ENCODE measurements at regions of chr6 and their contacts with region 1.

Region 1: GRCh38 chr6:37489660-37490361 is 9.9 kb downstream of the CCDC167 start:
- DNase-seq: peak in 4 of 5 donors; percentile 18 to 71 (median 46)
- H3K4me3 ChIP-seq: no peak overlapping the region
- H3K4me3 Mint-ChIP-seq: peak overlapping the region; percentile 11 to 86 (median 65)
- H3K27ac ChIP-seq: peak overlapping the region; percentile 52
- H3K27ac Mint-ChIP-seq: peak overlapping the region; percentile 92 to 99 (median 96)
- H3K4me1 ChIP-seq: peaks cover 44% of the 10 kb centered on the region
- H3K4me1 Mint-ChIP-seq: peaks cover 72 to 87% (median 79%) of the 10 kb centered on the region in 3 donors
- H3K27me3 ChIP-seq: no peaks in the 10 kb centered on the region
- H3K27me3 Mint-ChIP-seq: no peaks in the 10 kb centered on the region

Region 2: GRCh38 chr6:37169496-37170272 is 320.1 kb before region 1 on chr6 and contains the start of gene PIM1:
- CTCF ChIA-PET with region 1: no interaction called
- POLR2A ChIA-PET with region 1: no interaction called
- DNase-seq: peak; percentile 92 to 99 (median 98)
- H3K4me3 ChIP-seq: peak within 1 kb of the TSS; percentile 68
- H3K4me3 Mint-ChIP-seq: peak within 1 kb of the TSS; percentile 90 to 99 (median 94)
- H3K27ac ChIP-seq: peak within 1 kb of the TSS; percentile 89
- H3K27ac Mint-ChIP-seq: peak within 1 kb of the TSS; percentile 91 to 98 (median 96)
- H3K4me1 ChIP-seq: peaks cover 29% of the 10 kb centered on the region
- H3K4me1 Mint-ChIP-seq: peaks cover 40 to 42% (median 41%) of the 10 kb centered on the region in 3 donors
- H3K27me3 ChIP-seq: no peaks in the 10 kb centered on the region
- H3K27me3 Mint-ChIP-seq: peaks cover 0 to 3% of the 10 kb centered on the region in 2 donors
- total RNA-seq, gene PIM1: 93.7 to 99.1 TPM

Region 3: DNA sequence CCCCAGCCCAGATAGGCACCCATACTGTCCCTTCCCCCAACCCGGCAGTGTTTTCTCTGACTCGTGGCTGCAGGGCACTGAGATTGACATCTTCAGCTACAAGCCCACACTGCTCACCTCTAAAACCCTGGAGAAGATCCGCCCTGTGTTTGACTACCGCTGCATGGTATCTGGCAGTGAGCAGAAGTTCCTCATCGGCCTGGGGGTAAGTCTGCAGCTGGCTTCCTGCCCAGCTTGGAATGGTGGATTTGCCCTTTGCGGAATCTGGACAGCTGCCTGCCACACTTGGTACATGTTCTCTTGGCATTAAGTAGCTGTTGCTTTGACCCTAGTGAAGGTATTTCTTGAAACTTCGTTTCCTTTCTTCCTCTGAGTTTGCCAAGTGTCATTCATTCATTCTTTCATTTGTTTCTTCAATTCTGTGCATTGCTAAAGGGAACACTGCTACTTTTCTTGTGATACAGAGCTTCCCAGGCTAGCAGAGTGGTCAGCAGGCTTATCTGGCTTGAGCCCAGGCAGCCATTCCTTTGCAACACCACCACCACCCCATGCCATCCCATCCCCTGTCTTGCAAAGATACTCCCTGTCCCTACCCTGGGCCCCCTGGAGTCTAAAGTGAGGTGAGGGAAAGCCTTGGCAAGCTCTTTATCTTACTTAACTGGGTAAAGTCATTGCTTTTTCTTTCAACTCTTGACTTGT is 16.3 kb before region 1 on chr6:
- CTCF ChIA-PET with region 1: no interaction called
- POLR2A ChIA-PET with region 1: no interaction called
- DNase-seq: no peak
- H3K4me3 ChIP-seq: no peak overlapping the region
- H3K4me3 Mint-ChIP-seq: no peak overlapping the region
- H3K27ac ChIP-seq: no peak overlapping the region
- H3K27ac Mint-ChIP-seq: peak overlapping the region in 4 of 8 donors; percentile 2 to 62 (median 56)
- H3K4me1 ChIP-seq: no peaks in the 10 kb centered on the region
- H3K4me1 Mint-ChIP-seq: peaks cover 0 to 5% (median 0%) of the 10 kb centered on the region in 3 donors
- H3K27me3 ChIP-seq: no peaks in the 10 kb centered on the region
- H3K27me3 Mint-ChIP-seq: no peaks in the 10 kb centered on the region

Region 4: DNA sequence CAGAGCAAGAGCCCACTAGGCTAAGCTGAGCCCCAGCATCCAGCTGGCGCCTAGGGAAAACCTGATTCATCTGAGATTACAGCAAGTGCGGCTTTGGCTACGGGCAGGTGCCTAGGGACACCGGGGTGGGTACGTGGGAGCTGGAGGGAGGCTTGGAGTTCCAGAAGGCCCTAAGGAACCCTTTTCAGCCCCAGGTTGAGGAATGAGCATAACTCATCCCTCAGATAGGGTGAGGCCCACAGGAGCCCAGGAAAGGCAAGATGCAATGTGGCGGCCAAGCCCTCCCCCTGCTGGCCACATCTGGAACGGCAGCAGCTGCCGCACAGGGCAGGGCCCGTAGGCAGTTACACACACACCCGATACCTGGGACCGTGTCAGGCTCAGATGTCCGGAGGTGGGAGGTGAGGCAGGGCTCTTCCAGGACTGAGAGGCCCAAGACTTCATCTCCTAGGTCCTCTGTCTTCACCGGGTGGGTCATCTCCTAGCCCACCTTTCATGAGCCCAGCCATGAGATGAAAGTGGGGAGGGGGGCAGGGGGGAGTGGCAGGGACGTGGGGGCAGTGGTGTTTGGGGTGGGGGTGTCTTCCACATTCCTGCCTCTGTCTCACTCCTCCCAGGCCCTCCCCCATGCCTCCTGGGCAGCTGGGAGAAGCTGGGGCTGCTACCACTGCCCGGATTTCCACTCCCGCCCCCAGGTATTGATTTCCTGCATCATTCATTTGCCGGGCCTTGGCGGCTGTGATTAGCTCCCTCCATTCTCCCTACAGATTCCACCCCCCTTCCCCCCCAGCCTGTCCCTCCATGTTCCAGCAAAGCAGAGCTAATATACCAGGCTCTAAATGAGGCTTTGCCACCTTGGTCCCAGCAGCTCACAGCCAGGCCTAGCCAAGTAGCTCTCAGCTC is 202.3 kb after region 1 on chr6:
- CTCF ChIA-PET with region 1: interaction called, 14 read pairs
- POLR2A ChIA-PET with region 1: no interaction called
- DNase-seq: peak; percentile 64 to 81 (median 66)
- H3K4me3 ChIP-seq: no peak overlapping the region
- H3K4me3 Mint-ChIP-seq: peak overlapping the region in 2 of 7 donors; percentile 36 to 60
- H3K27ac ChIP-seq: no peak overlapping the region
- H3K27ac Mint-ChIP-seq: peak overlapping the region in 1 of 8 donors; percentile 57
- H3K4me1 ChIP-seq: peaks cover 15% of the 10 kb centered on the region
- H3K4me1 Mint-ChIP-seq: peaks cover 18 to 29% (median 28%) of the 10 kb centered on the region in 3 donors
- H3K27me3 ChIP-seq: peaks cover 39% of the 10 kb centered on the region
- H3K27me3 Mint-ChIP-seq: peaks cover 8 to 28% of the 10 kb centered on the region in 2 donors

Measured in CD8-positive, alpha-beta memory T cell (primary cell).